GM12878 (cell line): ENCODE measurements at regions of chr10 and their contacts with region 1.

Region 1: DNA sequence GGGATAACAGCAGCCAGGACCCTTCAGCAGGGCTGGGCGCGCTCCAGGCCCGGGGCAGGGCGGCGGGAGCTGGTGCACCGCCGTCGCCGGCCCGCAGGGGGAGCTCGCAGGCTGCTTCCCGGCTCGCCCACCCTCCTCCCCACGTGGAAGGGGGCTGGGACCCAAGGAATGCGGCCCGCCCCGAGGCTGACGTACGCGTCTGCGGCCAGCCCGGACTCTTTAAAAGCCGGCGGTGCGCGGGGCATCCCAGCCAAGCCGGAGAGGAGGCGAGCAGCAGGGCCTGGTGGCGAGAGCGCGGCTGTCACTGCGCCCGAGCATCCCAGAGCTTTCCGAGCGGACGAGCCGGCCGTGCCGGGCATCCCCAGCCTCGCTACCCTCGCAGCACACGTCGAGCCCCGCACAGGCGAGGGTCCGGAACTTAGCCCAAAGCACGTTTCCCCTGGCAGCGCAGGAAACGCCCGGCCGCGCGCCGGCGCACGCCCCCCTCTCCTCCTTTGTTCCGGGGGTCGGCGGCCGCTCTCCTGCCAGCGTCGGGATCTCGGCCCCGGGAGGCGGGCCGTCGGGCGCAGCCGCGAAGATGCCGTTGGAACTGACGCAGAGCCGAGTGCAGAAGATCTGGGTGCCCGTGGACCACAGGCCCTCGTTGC is at the start of gene PFKFB3:
- DNase-seq: peak; percentile 59
- ATAC-seq: peak; percentile 80
- H3K4me3 ChIP-seq: peak within 1 kb of the TSS; percentile 95
- H3K27ac ChIP-seq: peak within 1 kb of the TSS; percentile 35; the same call in 1 of the 2 replicates
- H3K4me1 ChIP-seq: peaks cover 10% of the 10 kb centered on the region
- H3K27me3 ChIP-seq: no peaks in the 10 kb centered on the region
- CTCF ChIP-seq: peak; percentile 84 to 96 (median 90); a peak in 5 of 6 replicates
- EP300 ChIP-seq: peak in 1 of 2 experiments; percentile 8; a peak in 1 of 4 replicates
- POLR2A ChIP-seq: peak; percentile 100
- RAD21 ChIP-seq: peak; percentile 76
- polyA plus RNA-seq, gene PFKFB3: 1.6 to 2.6 TPM

Region 2: GRCh38 chr10:5944389-5945189 is 258.2 kb before region 1 on chr10:
- CTCF ChIA-PET with region 1: no interaction called
- POLR2A ChIA-PET with region 1: no interaction called
- RAD21 ChIA-PET with region 1: no interaction called
- SMC1A ChIA-PET with region 1: no interaction called
- in situ Hi-C with region 1: no loop called
- intact Hi-C with region 1: no loop called
- DNase-seq: no peak
- ATAC-seq: no peak
- H3K4me3 ChIP-seq: no peak overlapping the region
- H3K27ac ChIP-seq: no peak overlapping the region
- H3K4me1 ChIP-seq: no peaks in the 10 kb centered on the region
- H3K27me3 ChIP-seq: no peaks in the 10 kb centered on the region
- CTCF ChIP-seq: no peak
- EP300 ChIP-seq: no peak
- POLR2A ChIP-seq: no peak
- RAD21 ChIP-seq: no peak

Region 3: DNA sequence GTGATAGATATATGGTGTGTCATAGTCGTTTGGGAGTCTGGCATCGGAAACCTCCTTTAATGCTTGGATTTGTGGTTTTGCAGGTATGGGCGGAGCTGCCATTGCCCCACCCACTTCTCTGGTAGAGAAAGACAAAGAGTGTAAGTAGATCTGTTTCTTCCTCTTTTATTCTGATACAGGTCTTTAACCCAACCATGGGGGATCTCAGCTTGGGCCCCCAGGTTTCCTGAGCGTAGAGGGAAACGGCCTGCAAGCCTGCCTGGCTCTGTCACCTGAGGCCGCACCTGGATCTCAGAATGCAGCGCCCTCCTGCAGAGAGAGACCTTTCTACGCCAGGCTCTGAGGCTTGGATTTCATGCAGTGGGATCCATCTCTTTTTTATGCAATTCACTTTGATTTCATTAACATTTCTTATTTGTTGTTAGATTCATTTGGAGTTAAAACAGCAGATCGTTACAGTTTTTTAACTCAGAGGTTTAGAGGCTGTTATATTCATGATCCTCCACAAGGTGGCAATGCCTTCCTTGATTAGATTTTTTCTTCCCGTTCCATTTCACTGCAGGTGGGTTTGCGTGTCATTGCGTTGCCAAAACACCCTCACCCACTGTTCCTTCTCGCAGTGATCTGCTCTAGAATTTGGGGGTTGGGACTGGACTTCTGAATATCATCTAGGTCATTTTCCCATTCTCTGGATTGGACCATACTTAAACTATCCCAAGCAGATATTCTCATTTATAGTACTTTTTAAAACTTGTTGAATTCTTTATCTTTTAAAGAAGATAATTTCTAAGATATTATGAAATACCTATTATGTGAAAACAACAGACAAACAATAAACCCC is 94.0 kb before region 1 on chr10:
- CTCF ChIA-PET with region 1: interaction called, 17 read pairs
- POLR2A ChIA-PET with region 1: no interaction called
- RAD21 ChIA-PET with region 1: interaction called, 4 read pairs
- SMC1A ChIA-PET with region 1: interaction called, 10 read pairs
- in situ Hi-C with region 1: no loop called
- intact Hi-C with region 1: loop called (anchors 1 kb)
- DNase-seq: no peak
- ATAC-seq: peak; percentile 72
- H3K4me3 ChIP-seq: no peak overlapping the region
- H3K27ac ChIP-seq: no peak overlapping the region
- H3K4me1 ChIP-seq: no peaks in the 10 kb centered on the region
- H3K27me3 ChIP-seq: no peaks in the 10 kb centered on the region
- CTCF ChIP-seq: peak; percentile 50 to 77 (median 74); a peak in 5 of 6 replicates
- EP300 ChIP-seq: no peak
- POLR2A ChIP-seq: no peak
- RAD21 ChIP-seq: peak; percentile 79

Region 4: GRCh38 chr10:6151087-6151977 is 51.5 kb before region 1 on chr10:
- CTCF ChIA-PET with region 1: interaction called, 10 read pairs
- POLR2A ChIA-PET with region 1: interaction called, 5 read pairs
- RAD21 ChIA-PET with region 1: interaction called, 10 read pairs
- SMC1A ChIA-PET with region 1: interaction called, 9 read pairs
- in situ Hi-C with region 1: no loop called
- intact Hi-C with region 1: no loop called
- DNase-seq: peak; percentile 51
- ATAC-seq: peak; percentile 86
- H3K4me3 ChIP-seq: peak overlapping the region; percentile 9
- H3K27ac ChIP-seq: peak overlapping the region; percentile 8; the same call in 1 of the 2 replicates
- H3K4me1 ChIP-seq: peaks cover 25% of the 10 kb centered on the region
- H3K27me3 ChIP-seq: no peaks in the 10 kb centered on the region
- CTCF ChIP-seq: peak; percentile 71 to 82 (median 81)
- EP300 ChIP-seq: no peak
- POLR2A ChIP-seq: no peak
- RAD21 ChIP-seq: peak; percentile 61

Region 5: GRCh38 chr10:6269953-6270867 is 67.4 kb after region 1 on chr10:
- CTCF ChIA-PET with region 1: interaction called, 5 read pairs
- POLR2A ChIA-PET with region 1: interaction called, 3 read pairs
- RAD21 ChIA-PET with region 1: interaction called, 13 read pairs
- SMC1A ChIA-PET with region 1: interaction called, 4 read pairs
- in situ Hi-C with region 1: no loop called
- intact Hi-C with region 1: loop called (anchors 1 kb)
- DNase-seq: peak; percentile 55
- ATAC-seq: peak; percentile 80
- H3K4me3 ChIP-seq: no peak overlapping the region
- H3K27ac ChIP-seq: peak overlapping the region; percentile 50
- H3K4me1 ChIP-seq: peaks cover 40% of the 10 kb centered on the region
- H3K27me3 ChIP-seq: no peaks in the 10 kb centered on the region
- CTCF ChIP-seq: no peak
- EP300 ChIP-seq: peak; percentile 98; a peak in 3 of 4 replicates
- POLR2A ChIP-seq: no peak
- RAD21 ChIP-seq: 0 out of 2 replicates have a peak, but pooled peaks have one; percentile 25

Region 6: DNA sequence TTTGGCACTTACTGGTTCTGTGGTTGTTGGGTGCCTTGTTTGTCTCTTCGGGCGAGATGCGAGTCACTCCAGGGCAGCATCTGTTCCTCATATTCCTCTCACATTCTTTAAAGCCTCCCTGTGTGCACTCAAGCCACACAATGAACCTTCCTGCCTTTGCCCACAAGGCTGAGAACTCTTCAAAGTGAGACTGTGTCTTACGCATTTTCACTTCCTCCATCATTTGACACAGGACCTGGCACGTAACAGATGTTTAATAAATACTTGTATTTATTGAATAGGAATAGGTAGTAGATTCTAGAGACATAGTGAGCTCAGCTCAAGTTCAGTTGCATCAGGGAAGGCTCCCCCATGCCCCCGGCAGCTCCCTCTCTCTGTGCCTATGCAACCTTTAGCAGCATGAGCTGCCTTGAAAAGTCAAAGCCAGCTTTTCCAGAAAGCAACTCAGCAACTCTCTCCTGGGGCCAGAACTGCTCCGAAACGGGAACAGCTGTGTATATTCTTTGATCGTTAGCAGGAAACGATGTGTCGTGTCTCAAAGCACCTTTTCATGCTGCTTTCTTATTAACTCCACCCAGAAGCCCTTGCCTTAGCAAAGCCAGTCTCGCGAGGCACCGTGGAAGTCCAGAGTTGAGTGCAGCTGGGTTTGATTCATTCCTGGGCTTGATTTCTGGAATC is 97.4 kb after region 1 on chr10:
- CTCF ChIA-PET with region 1: interaction called, 10 read pairs
- POLR2A ChIA-PET with region 1: interaction called, 6 read pairs
- RAD21 ChIA-PET with region 1: interaction called, 19 read pairs
- SMC1A ChIA-PET with region 1: interaction called, 10 read pairs
- in situ Hi-C with region 1: no loop called
- intact Hi-C with region 1: loop called (anchors 5 kb)
- DNase-seq: peak; percentile 97
- ATAC-seq: peak; percentile 82
- H3K4me3 ChIP-seq: peak overlapping the region; percentile 34; the same call in 1 of the 2 replicates
- H3K27ac ChIP-seq: peak overlapping the region; percentile 70
- H3K4me1 ChIP-seq: peaks cover 31% of the 10 kb centered on the region
- H3K27me3 ChIP-seq: no peaks in the 10 kb centered on the region
- CTCF ChIP-seq: no peak
- EP300 ChIP-seq: peak; percentile 99 to 100
- POLR2A ChIP-seq: 0 out of 2 replicates have a peak, but pooled peaks have one; percentile 31
- RAD21 ChIP-seq: no peak; the same call in 1 of the 2 replicates

Region 7: GRCh38 chr10:6396652-6397051 is 193.8 kb after region 1 on chr10:
- CTCF ChIA-PET with region 1: interaction called, 217 read pairs
- POLR2A ChIA-PET with region 1: interaction called, 35 read pairs
- RAD21 ChIA-PET with region 1: interaction called, 173 read pairs
- SMC1A ChIA-PET with region 1: interaction called, 104 read pairs
- in situ Hi-C with region 1: loop called (anchors 5 kb)
- intact Hi-C with region 1: loop called (anchors 1 kb)
- DNase-seq: no peak
- ATAC-seq: no peak; the same call in 2 of the 3 replicates
- H3K4me3 ChIP-seq: no peak overlapping the region
- H3K27ac ChIP-seq: no peak overlapping the region
- H3K4me1 ChIP-seq: no peaks in the 10 kb centered on the region
- H3K27me3 ChIP-seq: peaks cover 0 to 5% of the 10 kb centered on the region in 2 experiments; a peak in 2 of 4 replicates
- CTCF ChIP-seq: no peak
- EP300 ChIP-seq: no peak
- POLR2A ChIP-seq: no peak
- RAD21 ChIP-seq: no peak